Panc1 (cell line): ENCODE measurements at regions of chr17 and their contacts with region 1.

Region 1: DNA sequence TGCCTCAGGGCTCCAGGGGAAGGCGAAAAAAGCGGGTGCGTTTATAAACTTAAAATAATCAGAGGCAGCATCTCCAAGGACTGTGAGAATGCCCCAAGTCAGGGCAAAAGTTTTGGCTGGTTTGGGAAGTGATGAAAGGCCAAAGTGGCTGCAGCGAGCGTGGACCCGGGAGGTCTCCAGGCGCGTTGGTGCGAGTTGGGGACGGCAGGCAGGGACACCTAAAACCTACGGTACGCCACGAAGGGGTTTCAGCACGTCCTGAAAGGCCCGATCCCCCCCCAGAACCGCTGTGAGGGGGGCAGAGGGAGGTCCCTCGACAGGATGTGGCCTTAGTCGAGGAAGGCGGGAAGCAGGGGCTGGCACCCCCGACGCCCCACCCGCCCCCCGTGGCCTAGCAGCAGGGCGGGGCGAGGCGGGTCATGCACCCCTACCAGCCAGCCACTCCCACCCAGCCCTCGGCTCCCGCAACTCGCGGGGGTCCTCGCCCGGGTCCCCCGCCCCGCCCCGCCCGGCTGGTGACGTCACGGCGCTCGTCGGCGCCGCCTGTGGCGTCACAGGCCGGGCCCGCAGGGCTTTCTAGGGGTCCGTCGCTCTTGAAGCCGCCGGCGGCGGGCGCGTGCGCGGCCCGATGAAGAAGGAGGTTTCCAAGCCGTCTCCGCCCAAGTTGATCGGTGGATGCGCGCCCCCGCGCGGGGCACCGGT is at the start of gene MYCBPAP:
- DNase-seq: no peak
- ATAC-seq: peak; percentile 88
- H3K4me3 ChIP-seq: peak within 1 kb of the TSS; percentile 65 to 83
- H3K27ac ChIP-seq: peak within 1 kb of the TSS; percentile 88
- H3K4me1 ChIP-seq: peaks cover 11% of the 10 kb centered on the region
- H3K27me3 ChIP-seq: no peaks in the 10 kb centered on the region
- CTCF ChIP-seq: no peak
- total RNA-seq, gene MYCBPAP: 2.2 TPM

Region 2: DNA sequence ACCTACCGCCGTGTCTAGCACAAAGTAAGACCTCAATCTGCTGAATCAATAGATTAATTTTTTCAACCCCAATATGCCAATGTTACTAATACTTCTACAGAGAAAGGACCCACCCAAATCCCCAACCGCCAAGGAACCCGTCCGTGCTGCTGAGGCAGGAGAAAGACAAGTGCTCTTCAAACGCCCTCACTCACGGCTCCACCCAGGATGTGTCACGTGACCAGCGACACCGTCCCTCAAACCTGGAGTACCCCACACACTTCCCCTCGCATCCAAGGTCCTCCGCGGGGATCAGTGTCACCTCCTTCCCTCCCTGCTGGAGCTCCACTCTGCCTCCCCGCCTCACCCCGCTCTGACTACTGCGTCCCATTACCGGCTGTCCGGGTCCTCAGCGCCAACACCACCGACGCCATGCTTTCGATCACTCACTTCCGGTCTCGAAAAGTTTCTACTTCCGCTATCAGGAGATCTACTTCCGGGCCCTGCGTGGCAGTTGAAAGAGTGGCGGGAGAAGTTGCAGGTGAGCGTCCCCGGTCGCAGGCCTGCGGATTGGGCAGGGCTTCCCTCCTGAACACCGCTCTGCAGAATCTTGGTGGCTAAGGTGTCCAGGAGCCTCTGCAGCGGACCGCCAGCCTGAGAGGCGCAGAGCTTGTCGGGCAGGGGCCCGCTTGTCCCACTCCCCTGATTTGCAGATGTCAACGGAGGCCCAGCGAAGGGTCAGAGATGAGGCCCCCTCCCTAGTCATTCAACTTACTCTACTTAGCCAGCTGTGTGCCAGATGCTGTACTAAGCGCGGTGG is 135.1 kb before region 1 on chr17 and contains the starts of genes EME1 and MRPL27:
- CTCF ChIA-PET with region 1: no interaction called
- POLR2A ChIA-PET with region 1: interaction called, 14 read pairs
- in situ Hi-C with region 1: no loop called
- intact Hi-C with region 1: no loop called
- DNase-seq: peak; percentile 80
- ATAC-seq: peak; percentile 98
- H3K4me3 ChIP-seq: peak within 1 kb of the TSS; percentile 53 to 95
- H3K27ac ChIP-seq: peak within 1 kb of the TSS; percentile 86
- H3K4me1 ChIP-seq: peaks cover 5% of the 10 kb centered on the region
- H3K27me3 ChIP-seq: no peaks in the 10 kb centered on the region
- CTCF ChIP-seq: no peak
- total RNA-seq, gene EME1: 15.3 TPM
- total RNA-seq, gene MRPL27: 136 TPM

Region 3: GRCh38 chr17:50560185-50560824 is 52.3 kb after region 1 on chr17 and contains the start of gene CACNA1G:
- CTCF ChIA-PET with region 1: no interaction called
- POLR2A ChIA-PET with region 1: no interaction called
- in situ Hi-C with region 1: no loop called
- intact Hi-C with region 1: no loop called
- DNase-seq: no peak
- ATAC-seq: peak; percentile 90
- H3K4me3 ChIP-seq: peak within 1 kb of the TSS; percentile 76 to 90
- H3K27ac ChIP-seq: peak within 1 kb of the TSS; percentile 81
- H3K4me1 ChIP-seq: peaks cover 27% of the 10 kb centered on the region
- H3K27me3 ChIP-seq: no peaks in the 10 kb centered on the region; the same call in 1 of the 2 replicates
- CTCF ChIP-seq: no peak
- total RNA-seq, gene CACNA1G: 10.0 TPM